Motor neuron (in vitro differentiated cells): ENCODE measurements at regions of chr7 and their contacts with region 1.

Region 1: DNA sequence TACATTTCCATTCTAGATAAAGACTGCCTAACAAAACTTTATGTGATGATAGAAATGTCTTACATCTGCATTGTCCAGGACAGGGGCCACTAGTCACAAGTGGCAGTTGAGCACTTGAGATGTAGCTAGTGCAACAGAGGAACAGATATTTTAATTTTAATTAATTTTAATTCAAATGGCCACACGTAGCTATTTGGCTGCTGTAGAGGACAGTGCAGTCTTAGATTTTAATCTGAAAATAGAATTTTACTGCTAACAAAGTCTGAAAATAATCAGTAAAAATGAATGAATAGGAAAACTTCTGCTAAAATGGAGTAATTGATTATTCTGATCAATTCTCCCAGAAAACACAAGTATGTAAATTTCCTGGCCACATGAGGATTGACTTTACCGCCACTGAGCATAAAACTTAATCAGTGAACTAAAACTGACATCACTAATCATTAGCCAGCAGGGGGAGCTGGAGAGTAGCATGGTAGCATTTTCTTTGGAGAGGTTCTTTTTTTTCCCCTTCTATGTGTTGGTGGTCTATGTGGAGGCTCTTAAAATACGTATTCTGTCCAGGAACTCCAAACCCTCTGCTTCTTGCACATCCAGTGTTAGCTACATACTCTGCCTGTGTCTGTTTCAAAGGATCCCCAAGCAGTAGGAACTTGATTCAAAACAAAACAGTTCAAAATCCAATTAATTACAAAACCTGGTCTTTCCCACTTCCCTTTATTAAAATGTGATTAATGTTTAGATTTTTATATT is 52.1 kb downstream of the TSPAN12 start:
- ATAC-seq: peak in 4 of 8 experiments; percentile 35 to 70 (median 47)
- H3K4me3 ChIP-seq: no peak overlapping the region
- H3K27ac ChIP-seq: no peak overlapping the region
- H3K4me1 ChIP-seq: no peaks in the 10 kb centered on the region

Region 2: DNA sequence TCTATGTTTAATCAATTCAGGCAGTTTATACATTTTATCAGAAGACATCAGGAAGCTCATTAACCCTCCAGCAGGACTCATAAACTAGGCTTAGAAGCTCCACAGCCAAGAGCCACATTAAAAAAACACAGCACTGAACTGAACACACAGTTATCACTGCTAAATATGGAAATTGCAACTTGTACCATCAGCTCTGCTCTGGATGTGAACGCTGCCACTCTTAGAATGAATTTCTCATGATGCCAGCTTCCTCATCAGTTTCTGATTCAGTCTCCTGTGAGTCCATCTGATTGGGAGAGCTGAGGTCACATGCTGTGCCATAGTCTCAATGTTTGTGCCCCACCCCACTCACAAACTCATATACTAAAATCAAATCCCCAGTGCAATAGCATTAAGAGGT is 127.7 kb after region 1 on chr7:
- in situ Hi-C with region 1: loop called in 3 of 9 experiments (anchors 10 to 25 kb)
- ATAC-seq: no peak
- H3K4me3 ChIP-seq: no peak overlapping the region
- H3K27ac ChIP-seq: no peak overlapping the region
- H3K4me1 ChIP-seq: no peaks in the 10 kb centered on the region

Region 3: GRCh38 chr7:120941064-120941463 is 135.3 kb after region 1 on chr7:
- in situ Hi-C with region 1: loop called in 3 of 9 experiments (anchors 10 to 25 kb)
- ATAC-seq: peak in 3 of 8 experiments; percentile 47 to 67 (median 49)
- H3K4me3 ChIP-seq: no peak overlapping the region
- H3K27ac ChIP-seq: no peak overlapping the region
- H3K4me1 ChIP-seq: peaks cover 0 to 3% of the 10 kb centered on the region in 2 donors

Region 4: DNA sequence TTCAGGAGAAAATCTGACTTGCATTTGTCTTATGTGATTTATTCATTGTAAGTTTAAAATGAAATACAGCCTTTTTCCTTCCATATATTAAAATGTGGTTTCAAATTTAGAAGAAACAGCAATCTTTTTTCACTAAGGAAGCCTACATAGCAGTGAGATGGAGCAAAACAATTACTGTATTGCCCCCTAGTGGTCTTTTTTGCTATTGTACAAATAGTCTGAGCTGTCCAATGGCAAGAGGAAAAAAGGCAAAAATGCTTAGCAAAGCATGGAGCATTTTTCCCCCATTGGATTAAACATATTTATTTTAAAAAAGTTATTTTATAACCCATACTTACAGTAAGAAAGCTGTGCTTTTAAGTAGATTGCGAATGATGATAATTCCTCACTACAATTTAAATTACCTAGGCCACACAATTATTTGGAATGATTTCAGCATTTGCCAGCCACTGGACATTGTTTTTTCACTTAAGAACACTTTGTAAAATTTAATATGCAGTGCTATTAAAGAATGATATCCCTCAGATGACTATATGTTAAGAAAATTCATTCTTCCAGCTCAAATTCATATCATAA is 302.2 kb after region 1 on chr7:
- in situ Hi-C with region 1: loop called in 1 of 9 experiments (anchors 25 kb)
- ATAC-seq: peak; percentile 57 to 93 (median 78)
- H3K4me3 ChIP-seq: no peak overlapping the region
- H3K27ac ChIP-seq: no peak overlapping the region
- H3K4me1 ChIP-seq: peaks cover 3 to 16% of the 10 kb centered on the region in 2 donors